Kidney (tissue), 22 donors: ENCODE measurements at regions of chr13 and their contacts with region 1.

Region 1: DNA sequence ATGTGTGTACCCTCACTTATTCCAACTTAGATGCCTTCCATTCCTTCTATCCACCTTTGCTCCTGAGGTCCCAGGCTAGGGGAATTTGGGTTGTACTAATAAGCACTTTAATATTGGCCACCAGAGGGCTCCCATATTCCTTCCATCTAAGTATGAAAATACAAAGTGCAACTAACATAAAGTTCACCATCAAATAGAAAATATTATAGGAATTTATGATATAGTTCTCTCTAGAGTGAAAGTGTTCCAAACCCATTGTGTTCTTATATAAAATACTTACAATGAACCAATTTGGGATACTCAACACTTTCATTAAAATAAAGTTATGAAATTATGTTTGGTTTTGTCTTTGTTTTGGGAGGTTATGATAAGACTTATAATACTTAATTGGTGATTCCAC is 62.3 kb downstream of the ITGBL1 start:
- DNase-seq: peak in 2 of 5 donors; percentile 68 to 77
- H3K4me3 ChIP-seq: no peak overlapping the region
- H3K27ac ChIP-seq: no peak overlapping the region
- H3K4me1 ChIP-seq: no peaks in the 10 kb centered on the region
- H3K27me3 ChIP-seq: no peaks in the 10 kb centered on the region
- CTCF ChIP-seq: peak; percentile 60

Region 2: DNA sequence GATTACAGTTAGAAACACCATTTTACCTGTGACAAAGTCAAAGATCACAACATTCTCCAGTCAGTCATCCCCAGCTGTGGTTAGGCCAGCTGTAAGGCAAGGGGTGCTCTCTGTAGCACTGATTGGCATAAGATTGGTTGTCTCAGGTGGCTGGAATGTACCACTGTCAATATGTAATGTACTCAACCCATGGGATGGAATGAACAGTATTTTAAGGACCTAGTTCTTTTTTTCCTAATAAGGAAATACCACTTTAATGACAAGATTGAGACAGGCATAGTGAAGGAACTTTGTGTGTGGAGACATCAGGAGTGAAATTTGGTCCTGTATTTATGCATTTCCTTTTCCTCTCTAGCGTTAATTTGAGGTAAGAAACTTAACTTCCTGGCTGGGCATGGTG is 248.4 kb after region 1 on chr13:
- intact Hi-C with region 1: loop called (anchors 10 kb)
- DNase-seq: no peak
- H3K4me3 ChIP-seq: no peak overlapping the region
- H3K27ac ChIP-seq: no peak overlapping the region
- H3K4me1 ChIP-seq: no peaks in the 10 kb centered on the region
- H3K27me3 ChIP-seq: no peaks in the 10 kb centered on the region
- CTCF ChIP-seq: no peak